Panc1 (cell line): ENCODE measurements at regions of chr5 and their contacts with region 1.

Region 1: DNA sequence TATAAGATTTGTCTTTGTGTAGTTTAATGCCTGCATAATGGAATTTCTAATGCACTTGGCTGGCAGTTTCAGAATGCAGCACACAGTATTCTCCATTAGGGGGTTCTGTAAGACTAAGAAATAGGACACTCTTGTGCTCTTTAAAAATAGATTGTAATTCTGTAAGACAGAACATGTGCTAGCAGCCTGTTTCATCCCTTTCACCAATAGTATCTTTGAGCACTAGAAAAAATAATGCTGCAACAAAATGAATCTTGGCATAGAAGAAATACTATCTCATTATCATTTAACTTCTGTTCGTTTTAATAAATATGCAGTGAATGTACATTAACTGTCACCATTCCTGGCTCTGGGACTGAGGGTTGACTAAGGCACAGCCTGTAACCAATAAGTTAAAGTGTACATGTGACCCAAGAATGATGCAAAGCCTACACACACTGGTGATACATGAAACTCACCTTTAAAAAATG is 23.8 kb upstream of the ZNF622 start:
- DNase-seq: peak; percentile 70
- ATAC-seq: peak; percentile 93
- H3K4me3 ChIP-seq: no peak overlapping the region
- H3K27ac ChIP-seq: no peak overlapping the region
- H3K4me1 ChIP-seq: no peaks in the 10 kb centered on the region
- H3K27me3 ChIP-seq: 0 out of 2 replicates have a peak, but pooled peaks cover 2% of the 10 kb centered on the region
- CTCF ChIP-seq: peak; percentile 72; the same call in 1 of the 2 replicates

Region 2: GRCh38 chr5:16552666-16553343 is 63.4 kb after region 1 on chr5:
- CTCF ChIA-PET with region 1: interaction called, 3 read pairs
- POLR2A ChIA-PET with region 1: no interaction called
- in situ Hi-C with region 1: no loop called
- intact Hi-C with region 1: loop called (anchors 1 kb)
- DNase-seq: no peak
- ATAC-seq: peak; percentile 91
- H3K4me3 ChIP-seq: no peak overlapping the region
- H3K27ac ChIP-seq: no peak overlapping the region
- H3K4me1 ChIP-seq: no peaks in the 10 kb centered on the region
- H3K27me3 ChIP-seq: no peaks in the 10 kb centered on the region
- CTCF ChIP-seq: peak; percentile 92

Region 3: GRCh38 chr5:16663840-16664239 is 174.5 kb after region 1 on chr5:
- CTCF ChIA-PET with region 1: interaction called, 5 read pairs
- POLR2A ChIA-PET with region 1: no interaction called
- in situ Hi-C with region 1: no loop called
- intact Hi-C with region 1: loop called (anchors 5 kb)
- DNase-seq: no peak
- ATAC-seq: no peak
- H3K4me3 ChIP-seq: no peak overlapping the region
- H3K27ac ChIP-seq: no peak overlapping the region
- H3K4me1 ChIP-seq: no peaks in the 10 kb centered on the region
- H3K27me3 ChIP-seq: no peaks in the 10 kb centered on the region
- CTCF ChIP-seq: no peak

Region 4: DNA sequence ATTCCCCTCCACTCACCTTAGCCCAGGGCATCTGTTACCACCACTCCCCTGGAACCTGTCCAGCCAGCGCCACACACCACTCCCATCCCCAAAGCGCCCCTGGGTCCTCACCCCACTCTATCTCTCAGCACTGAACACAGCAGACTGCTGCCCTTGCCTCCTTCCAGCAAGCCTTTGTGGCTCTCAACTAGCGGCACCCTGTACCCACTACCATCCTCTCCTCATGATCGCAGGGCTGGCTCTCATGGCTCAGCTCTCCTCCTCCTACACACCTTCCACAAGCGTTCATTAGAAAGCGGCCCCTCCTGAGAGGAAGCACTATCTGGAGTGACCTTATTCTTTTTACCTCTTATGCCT is 714.8 kb after region 1 on chr5:
- CTCF ChIA-PET with region 1: no interaction called
- POLR2A ChIA-PET with region 1: no interaction called
- in situ Hi-C with region 1: no loop called
- intact Hi-C with region 1: loop called (anchors 5 kb)
- DNase-seq: no peak
- ATAC-seq: peak; percentile 36
- H3K4me3 ChIP-seq: no peak overlapping the region
- H3K27ac ChIP-seq: no peak overlapping the region
- H3K4me1 ChIP-seq: 0 out of 2 replicates have a peak, but pooled peaks cover 2% of the 10 kb centered on the region
- H3K27me3 ChIP-seq: no peaks in the 10 kb centered on the region
- CTCF ChIP-seq: no peak